Upper lobe of right lung (tissue), 1 donor: ENCODE measurements at regions of chr12 and their contacts with region 1.

Region 1: DNA sequence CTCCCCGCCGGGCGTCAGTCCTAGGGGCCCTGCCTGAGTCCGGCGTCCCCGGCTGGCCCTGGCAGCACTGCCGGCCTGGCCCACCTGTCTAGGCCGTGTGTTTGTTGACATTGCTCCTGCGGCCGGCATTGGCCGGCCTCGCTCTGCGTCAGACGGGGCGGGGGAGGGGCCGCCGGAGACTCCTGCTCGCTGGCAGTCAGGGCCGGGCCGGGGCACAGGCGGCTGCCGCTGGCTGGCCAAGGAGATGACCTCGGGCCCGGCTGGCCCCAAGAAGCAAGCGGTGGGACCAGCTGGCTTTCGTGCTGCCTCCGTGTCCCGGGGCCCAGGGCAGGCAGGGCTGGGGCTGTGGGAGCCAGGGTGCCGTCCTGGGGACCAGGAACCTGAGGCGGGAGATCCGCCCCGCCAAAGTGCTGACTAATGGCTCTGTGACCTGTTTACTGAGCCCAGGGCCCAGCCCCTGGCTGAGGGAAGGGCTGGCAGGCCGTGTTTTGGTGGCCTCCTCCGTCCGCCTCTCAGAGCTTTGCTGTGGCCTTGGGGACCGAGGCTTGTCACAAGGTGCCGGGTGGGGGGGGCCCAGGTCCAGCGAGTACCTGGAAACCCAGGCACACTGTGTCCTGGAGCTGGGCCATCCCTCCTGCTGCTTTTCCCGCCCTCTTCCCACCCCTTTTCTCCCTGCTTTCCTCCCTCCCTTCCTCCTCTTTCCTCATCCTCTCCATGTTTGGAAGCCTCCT is 1.8 kb downstream of the ULK1 start:
- DNase-seq: peak; percentile 96
- ATAC-seq: peak; percentile 87
- H3K4me3 ChIP-seq: peak overlapping the region; percentile 80
- H3K27ac ChIP-seq: peak overlapping the region; percentile 96
- H3K4me1 ChIP-seq: peaks cover 29% of the 10 kb centered on the region
- H3K27me3 ChIP-seq: no peaks in the 10 kb centered on the region
- CTCF ChIP-seq: no peak

Region 2: GRCh38 chr12:131944601-131945251 is 48.5 kb after region 1 on chr12:
- intact Hi-C with region 1: loop called (anchors 5 kb)
- DNase-seq: peak; percentile 59
- ATAC-seq: no peak
- H3K4me3 ChIP-seq: no peak overlapping the region
- H3K27ac ChIP-seq: no peak overlapping the region
- H3K4me1 ChIP-seq: peaks cover 6% of the 10 kb centered on the region
- H3K27me3 ChIP-seq: no peaks in the 10 kb centered on the region
- CTCF ChIP-seq: no peak